ENCODE measurements at regions of chr12 and their contacts with region 1.

Region 1: DNA sequence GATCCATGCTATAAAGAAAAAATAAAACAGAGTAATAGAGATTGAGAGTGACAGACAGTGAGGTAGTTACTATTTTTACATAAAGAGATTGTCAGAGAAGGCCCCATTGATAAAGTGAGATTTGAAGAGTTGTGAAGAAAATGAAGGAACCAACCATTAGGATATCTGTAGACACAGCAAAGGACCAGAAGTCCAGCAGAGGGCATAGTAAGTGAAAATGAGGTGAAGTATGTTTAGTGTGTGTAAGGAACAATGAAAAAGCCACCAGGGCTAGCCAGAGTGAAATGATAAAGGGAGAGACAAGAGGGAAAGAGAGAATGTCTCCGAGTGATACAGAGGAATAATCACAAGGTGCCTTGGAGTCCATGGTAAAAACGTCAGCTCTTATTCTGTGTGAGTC is 411.0 kb downstream of the NELL2 start:
- DNase-seq: no peak
- H3K4me3 ChIP-seq: no peak overlapping the region
- H3K27ac ChIP-seq: no peak overlapping the region
- H3K4me1 ChIP-seq: no peaks in the 10 kb centered on the region
- CTCF ChIP-seq: peak; percentile 44

Region 2: DNA sequence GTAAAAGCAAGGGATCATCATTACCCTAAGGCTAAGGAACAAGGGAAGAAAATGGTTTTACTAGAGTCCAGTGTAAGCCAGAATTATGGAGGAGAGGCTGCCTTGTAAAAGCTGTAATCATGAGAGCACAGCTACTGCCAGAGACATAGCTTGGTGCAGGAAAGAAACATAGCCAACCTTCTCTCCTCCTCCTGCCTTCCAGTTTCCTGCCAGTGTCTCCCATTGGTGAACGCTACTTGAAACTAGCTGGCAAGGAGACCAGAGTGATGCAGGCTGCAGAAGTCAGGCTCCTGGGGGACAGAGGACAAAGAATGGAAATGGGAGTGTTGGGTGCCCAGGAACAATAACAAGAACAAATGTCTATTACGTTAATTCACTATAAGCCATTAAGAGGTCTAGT is 252.5 kb after region 1 on chr12:
- CTCF ChIA-PET with region 1: no interaction called
- POLR2A ChIA-PET with region 1: no interaction called
- intact Hi-C with region 1: no loop called
- DNase-seq: no peak
- H3K4me3 ChIP-seq: no peak overlapping the region
- H3K27ac ChIP-seq: no peak overlapping the region
- H3K4me1 ChIP-seq: peaks cover 29% of the 10 kb centered on the region
- CTCF ChIP-seq: no peak

Region 3: GRCh38 chr12:44942714-44943113 is 477.6 kb after region 1 on chr12:
- CTCF ChIA-PET with region 1: no interaction called
- POLR2A ChIA-PET with region 1: no interaction called
- intact Hi-C with region 1: loop called (anchors 10 kb)
- DNase-seq: no peak
- H3K4me3 ChIP-seq: no peak overlapping the region
- H3K27ac ChIP-seq: no peak overlapping the region
- H3K4me1 ChIP-seq: no peaks in the 10 kb centered on the region
- CTCF ChIP-seq: no peak

Measured in OCI-LY7 (cell line).